Transverse colon (tissue), 4 donors: ENCODE measurements at regions of chr3 and their contacts with region 1.

Region 1: DNA sequence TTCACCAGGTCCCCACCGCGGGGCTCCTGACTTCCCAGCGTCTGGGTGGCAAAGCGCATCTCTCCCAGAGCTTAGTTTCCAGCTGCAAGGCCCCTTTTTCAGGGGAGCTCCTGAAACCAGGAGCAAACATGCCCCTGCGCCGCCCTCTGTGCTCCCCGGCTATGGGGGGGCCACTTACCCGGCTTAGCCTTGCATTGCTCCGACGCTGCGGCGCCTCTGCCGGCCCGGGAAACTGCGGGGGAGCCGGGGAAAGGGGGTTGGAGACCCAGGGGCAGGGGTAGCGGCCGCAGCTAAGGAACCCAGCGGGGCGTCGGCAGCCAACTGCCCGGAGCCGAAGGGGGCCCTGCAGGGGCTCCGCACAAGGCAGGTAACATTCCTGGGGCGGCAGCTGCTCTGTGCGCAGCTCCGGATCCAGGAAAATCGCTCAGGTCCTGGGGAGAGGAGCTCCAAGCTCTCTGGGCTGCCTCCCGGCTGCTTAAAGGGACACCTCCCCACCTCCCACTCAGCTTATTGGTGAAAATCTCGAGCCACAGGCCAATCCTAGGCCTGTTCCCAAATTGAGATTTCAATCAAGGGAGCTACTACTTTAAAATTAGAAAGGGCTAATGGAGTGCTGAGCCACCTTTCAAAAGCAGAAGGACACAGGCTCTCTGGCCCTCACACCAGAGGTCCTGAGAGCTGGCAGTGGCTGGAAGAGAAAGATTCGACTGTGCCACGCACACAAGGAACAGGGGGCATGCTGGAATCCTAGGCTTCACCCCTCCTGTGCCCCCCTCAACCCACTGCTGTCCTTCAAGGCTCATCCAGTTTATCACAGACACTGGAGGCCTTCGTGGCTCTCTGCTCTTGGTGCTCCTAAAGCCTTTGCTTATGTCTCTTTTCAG is 42.7 kb upstream of the PRICKLE2 start:
- DNase-seq: peak; percentile 55
- H3K4me3 ChIP-seq: peak overlapping the region; percentile 30 to 60 (median 52)
- H3K27ac ChIP-seq: peak overlapping the region; percentile 87 to 94 (median 92)
- H3K4me1 ChIP-seq: peaks cover 0 to 17% (median 8%) of the 10 kb centered on the region in 4 donors
- H3K27me3 ChIP-seq: peaks cover 18% of the 10 kb centered on the region
- CTCF ChIP-seq: no peak
- EP300 ChIP-seq: no peak
- POLR2A ChIP-seq: peak; percentile 67

Region 2: DNA sequence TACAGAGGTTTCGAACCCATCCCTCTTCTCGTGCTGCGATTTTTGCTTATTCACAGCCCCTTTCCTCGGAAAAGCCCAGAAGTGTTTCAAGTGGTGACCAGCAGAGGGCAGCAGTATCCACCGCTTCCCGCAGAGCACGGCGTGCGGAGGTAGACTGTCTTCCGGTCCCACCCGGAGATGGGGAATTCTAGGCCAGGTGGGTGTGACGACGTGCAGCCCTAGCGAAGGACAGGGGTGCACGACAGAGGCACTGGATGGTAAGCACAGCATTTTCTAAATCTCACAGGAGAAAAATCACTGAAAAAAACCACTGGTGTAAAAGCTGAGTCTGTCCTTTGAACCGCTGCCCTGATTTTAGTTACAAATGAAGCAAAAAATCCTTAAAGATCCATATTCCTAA is 237.2 kb before region 1 on chr3:
- in situ Hi-C with region 1: loop called in 1 of 4 experiments (anchors 25 kb)
- intact Hi-C with region 1: no loop called
- DNase-seq: peak; percentile 79
- H3K4me3 ChIP-seq: peak overlapping the region in 3 of 4 donors; percentile 4 to 30 (median 9)
- H3K27ac ChIP-seq: no peak overlapping the region
- H3K4me1 ChIP-seq: peaks cover 0 to 7% (median 3%) of the 10 kb centered on the region in 4 donors
- H3K27me3 ChIP-seq: peaks cover 6% of the 10 kb centered on the region
- CTCF ChIP-seq: peak; percentile 86 to 92 (median 91)
- EP300 ChIP-seq: no peak
- POLR2A ChIP-seq: no peak

Region 3: GRCh38 chr3:64150623-64151207 is 117.2 kb before region 1 on chr3:
- in situ Hi-C with region 1: loop called in 1 of 4 experiments (anchors 25 kb)
- intact Hi-C with region 1: loop called (anchors 5 kb)
- DNase-seq: peak; percentile 82
- H3K4me3 ChIP-seq: no peak overlapping the region
- H3K27ac ChIP-seq: peak overlapping the region; percentile 81 to 87 (median 84)
- H3K4me1 ChIP-seq: peaks cover 15 to 40% (median 33%) of the 10 kb centered on the region in 4 donors
- H3K27me3 ChIP-seq: no peaks in the 10 kb centered on the region
- CTCF ChIP-seq: no peak
- EP300 ChIP-seq: peak; percentile 50
- POLR2A ChIP-seq: no peak

Region 4: GRCh38 chr3:64157150-64158035 is 110.6 kb before region 1 on chr3:
- in situ Hi-C with region 1: loop called in 1 of 4 experiments (anchors 25 kb)
- intact Hi-C with region 1: loop called (anchors 5 kb)
- DNase-seq: peak; percentile 28
- H3K4me3 ChIP-seq: no peak overlapping the region
- H3K27ac ChIP-seq: peak overlapping the region; percentile 10 to 62 (median 41)
- H3K4me1 ChIP-seq: peaks cover 12 to 57% (median 33%) of the 10 kb centered on the region in 4 donors
- H3K27me3 ChIP-seq: no peaks in the 10 kb centered on the region
- CTCF ChIP-seq: no peak
- EP300 ChIP-seq: no peak
- POLR2A ChIP-seq: no peak

Region 5: DNA sequence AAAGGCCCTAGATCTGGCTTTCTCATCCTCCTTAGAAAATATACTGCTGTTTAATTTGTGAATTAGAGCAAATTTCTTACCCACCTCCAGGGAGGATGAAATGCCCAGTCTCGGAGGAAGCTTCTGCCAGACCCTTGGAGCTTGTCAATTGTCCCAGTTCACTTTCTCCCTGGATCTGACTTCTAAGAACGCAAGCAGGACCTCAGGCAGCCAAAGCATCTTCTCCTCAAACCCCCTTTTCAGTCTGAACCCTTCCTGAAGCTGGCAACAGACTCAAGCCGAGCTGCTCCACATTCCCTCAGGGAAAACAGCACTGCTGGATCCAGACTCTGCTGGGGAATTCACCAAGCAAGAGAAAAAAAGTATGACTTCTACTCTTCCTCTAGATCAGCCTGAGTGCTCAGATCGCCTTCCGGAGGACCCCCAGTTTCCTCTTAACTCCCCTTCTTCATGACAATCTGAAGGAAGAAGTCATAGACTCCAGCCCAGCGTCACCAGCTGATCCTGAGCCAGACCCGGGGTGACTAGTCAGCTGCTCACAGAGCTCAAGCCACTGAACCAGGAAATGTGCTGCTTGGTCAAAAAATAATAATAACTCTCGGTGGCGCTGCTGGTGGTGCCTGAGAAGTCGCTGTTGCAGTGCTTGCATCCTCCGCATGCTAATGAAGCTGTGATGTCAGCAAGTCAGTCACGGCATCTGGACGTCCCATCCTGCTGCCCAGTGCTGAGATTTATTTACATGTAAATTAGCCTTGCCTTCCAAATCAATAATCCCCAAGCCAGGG is 42.9 kb before region 1 on chr3 and contains the start of gene PRICKLE2:
- in situ Hi-C with region 1: no loop called
- intact Hi-C with region 1: loop called (anchors 5 kb)
- DNase-seq: peak; percentile 57
- H3K4me3 ChIP-seq: peak within 1 kb of the TSS in 1 of 4 donors; percentile 17
- H3K27ac ChIP-seq: peak within 1 kb of the TSS; percentile 72 to 84 (median 80)
- H3K4me1 ChIP-seq: peaks cover 0 to 55% (median 28%) of the 10 kb centered on the region in 4 donors
- H3K27me3 ChIP-seq: no peaks in the 10 kb centered on the region
- CTCF ChIP-seq: no peak
- EP300 ChIP-seq: no peak
- POLR2A ChIP-seq: no peak
- total RNA-seq, gene PRICKLE2: 8.5 to 38.4 (median 17.4) TPM

Region 6: GRCh38 chr3:64345371-64345770 is 77.4 kb after region 1 on chr3:
- in situ Hi-C with region 1: no loop called
- intact Hi-C with region 1: loop called (anchors 10 kb)
- DNase-seq: no peak
- H3K4me3 ChIP-seq: no peak overlapping the region
- H3K27ac ChIP-seq: peak overlapping the region; percentile 68 to 88 (median 82)
- H3K4me1 ChIP-seq: peaks cover 4 to 32% (median 11%) of the 10 kb centered on the region in 4 donors
- H3K27me3 ChIP-seq: no peaks in the 10 kb centered on the region
- CTCF ChIP-seq: no peak
- EP300 ChIP-seq: no peak
- POLR2A ChIP-seq: no peak

Region 7: GRCh38 chr3:64399205-64399800 is 131.3 kb after region 1 on chr3:
- in situ Hi-C with region 1: no loop called
- intact Hi-C with region 1: loop called (anchors 2 kb)
- DNase-seq: no peak
- H3K4me3 ChIP-seq: no peak overlapping the region
- H3K27ac ChIP-seq: peak overlapping the region in 2 of 4 donors; percentile 67 to 69
- H3K4me1 ChIP-seq: peaks cover 0 to 6% (median 0%) of the 10 kb centered on the region in 4 donors
- H3K27me3 ChIP-seq: no peaks in the 10 kb centered on the region
- CTCF ChIP-seq: peak; percentile 69 to 74 (median 70)
- EP300 ChIP-seq: no peak
- POLR2A ChIP-seq: no peak

Region 8: GRCh38 chr3:64634417-64634816 is 366.5 kb after region 1 on chr3:
- in situ Hi-C with region 1: no loop called
- intact Hi-C with region 1: no loop called
- DNase-seq: no peak
- H3K4me3 ChIP-seq: no peak overlapping the region
- H3K27ac ChIP-seq: no peak overlapping the region
- H3K4me1 ChIP-seq: no peaks in the 10 kb centered on the region
- H3K27me3 ChIP-seq: no peaks in the 10 kb centered on the region
- CTCF ChIP-seq: no peak
- EP300 ChIP-seq: no peak
- POLR2A ChIP-seq: no peak